Activated CD4-positive, alpha-beta memory T cell treated with anti-CD3 and anti-CD28 coated beads, Interleukin-2, amount 10 ng/mL, durations not matched to agents 7 days and 5 days (primary cell): ENCODE measurements at regions of chr1 and their contacts with region 1.

Region 1: DNA sequence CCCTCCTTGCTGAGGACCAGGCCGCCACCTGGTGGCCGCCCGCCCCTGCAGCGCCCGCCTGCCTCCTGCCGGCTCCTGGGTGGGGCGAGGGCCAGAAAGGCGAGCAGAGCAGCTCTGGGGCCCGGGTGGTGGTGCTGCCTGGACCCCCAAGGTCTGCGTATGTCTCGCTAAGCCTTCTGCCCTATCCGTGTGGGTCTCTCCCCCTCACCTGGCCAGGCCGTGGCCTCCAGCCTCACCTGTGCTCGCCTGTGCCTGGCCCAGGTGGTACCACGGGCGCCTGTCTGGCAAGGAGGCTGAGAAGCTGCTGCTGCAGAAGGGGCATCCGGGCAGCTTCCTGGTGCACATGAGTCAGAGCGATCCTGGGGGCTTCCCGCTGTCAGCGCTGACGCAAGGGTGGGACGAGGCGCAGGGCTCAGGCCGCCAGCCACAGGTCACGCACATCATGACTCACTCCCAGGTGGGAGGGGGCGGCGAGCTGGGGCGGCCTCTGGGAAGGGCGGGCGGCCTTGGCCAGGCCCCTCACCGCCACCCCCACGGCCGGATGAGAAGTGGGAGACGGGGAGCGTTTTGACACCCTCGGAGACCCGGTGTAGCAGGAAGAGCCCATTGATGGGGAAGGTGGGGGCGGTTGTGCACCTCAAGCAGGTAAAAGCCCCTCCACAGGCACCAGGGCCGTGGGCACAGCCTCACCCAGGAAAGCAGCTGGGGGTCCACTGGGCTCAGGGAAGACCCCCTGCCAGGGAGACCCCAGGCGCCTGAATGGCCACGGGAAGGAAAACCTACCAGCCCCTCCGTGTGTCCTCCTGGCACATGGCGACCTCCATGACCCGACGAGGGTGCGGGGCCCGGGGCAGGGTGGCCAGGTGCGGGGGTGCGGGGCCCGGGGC is 9.9 kb downstream of the RNF223 start:
- DNase-seq: peak; percentile 87
- H3K4me3 Mint-ChIP-seq: peak overlapping the region; percentile 66
- H3K27ac Mint-ChIP-seq: peak overlapping the region; percentile 64
- H3K4me1 Mint-ChIP-seq: peaks cover 53% of the 10 kb centered on the region
- H3K27me3 Mint-ChIP-seq: no peaks in the 10 kb centered on the region

Region 2: GRCh38 chr1:983799-984473 is 80.3 kb before region 1 on chr1:
- CTCF ChIA-PET with region 1: interaction called, 19 read pairs
- POLR2A ChIA-PET with region 1: no interaction called
- DNase-seq: peak; percentile 67
- H3K4me3 Mint-ChIP-seq: no peak overlapping the region
- H3K27ac Mint-ChIP-seq: no peak overlapping the region
- H3K4me1 Mint-ChIP-seq: no peaks in the 10 kb centered on the region
- H3K27me3 Mint-ChIP-seq: peaks cover 28% of the 10 kb centered on the region